ENCODE measurements at regions of chr7 and their contacts with region 1.

Region 1: DNA sequence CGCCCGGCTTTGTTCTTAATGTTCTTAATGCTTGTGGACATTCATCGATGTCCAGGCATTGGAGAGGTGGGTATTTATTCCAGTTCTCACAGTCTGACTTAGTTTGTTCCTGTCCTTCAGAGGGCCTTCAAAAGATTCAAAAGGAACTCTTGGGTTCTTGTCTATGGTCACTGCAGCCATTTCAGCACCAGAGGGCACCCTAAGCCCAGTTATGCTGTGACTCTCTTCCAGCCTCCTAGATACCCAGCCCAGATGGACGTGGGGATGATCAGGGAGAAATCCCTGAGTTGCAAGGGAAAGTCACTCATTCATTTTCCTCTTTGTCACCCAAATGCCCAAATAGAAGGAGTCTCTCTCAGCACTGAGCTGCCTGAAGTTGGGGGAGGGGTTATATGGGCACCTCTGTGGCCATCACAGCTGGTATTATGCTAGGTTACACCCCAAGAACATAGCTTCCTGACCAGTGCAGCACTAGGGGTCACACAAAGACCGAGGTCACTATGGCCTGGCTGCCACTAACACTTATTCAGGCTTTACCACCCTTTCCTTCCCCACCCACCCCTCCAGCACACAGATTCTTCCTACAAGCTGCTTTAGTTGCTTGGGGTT is 26.5 kb upstream of the CCDC126 start:
- DNase-seq: peak; percentile 77
- ATAC-seq: peak; percentile 91
- H3K4me3 ChIP-seq: no peak overlapping the region
- H3K4me3 Mint-ChIP-seq: peak overlapping the region; percentile 57
- H3K27ac ChIP-seq: no peak overlapping the region
- H3K27ac Mint-ChIP-seq: no peak overlapping the region
- H3K4me1 ChIP-seq: no peaks in the 10 kb centered on the region
- H3K4me1 Mint-ChIP-seq: peaks cover 3% of the 10 kb centered on the region
- H3K27me3 ChIP-seq: peaks cover 0 to 4% (median 0%) of the 10 kb centered on the region in 4 experiments
- H3K27me3 Mint-ChIP-seq: peaks cover 10% of the 10 kb centered on the region
- CTCF ChIP-seq: peak; percentile 84

Region 2: GRCh38 chr7:23454881-23455506 is 115.7 kb before region 1 on chr7:
- CTCF ChIA-PET with region 1: no interaction called
- POLR2A ChIA-PET with region 1: no interaction called
- intact Hi-C with region 1: no loop called
- DNase-seq: no peak
- ATAC-seq: no peak
- H3K4me3 ChIP-seq: no peak overlapping the region
- H3K4me3 Mint-ChIP-seq: no peak overlapping the region
- H3K27ac ChIP-seq: no peak overlapping the region
- H3K27ac Mint-ChIP-seq: no peak overlapping the region
- H3K4me1 ChIP-seq: no peaks in the 10 kb centered on the region
- H3K4me1 Mint-ChIP-seq: peaks cover 2% of the 10 kb centered on the region
- H3K27me3 ChIP-seq: peaks cover 0 to 12% (median 1%) of the 10 kb centered on the region in 4 experiments
- H3K27me3 Mint-ChIP-seq: peaks cover 20% of the 10 kb centered on the region
- CTCF ChIP-seq: no peak

Region 3: DNA sequence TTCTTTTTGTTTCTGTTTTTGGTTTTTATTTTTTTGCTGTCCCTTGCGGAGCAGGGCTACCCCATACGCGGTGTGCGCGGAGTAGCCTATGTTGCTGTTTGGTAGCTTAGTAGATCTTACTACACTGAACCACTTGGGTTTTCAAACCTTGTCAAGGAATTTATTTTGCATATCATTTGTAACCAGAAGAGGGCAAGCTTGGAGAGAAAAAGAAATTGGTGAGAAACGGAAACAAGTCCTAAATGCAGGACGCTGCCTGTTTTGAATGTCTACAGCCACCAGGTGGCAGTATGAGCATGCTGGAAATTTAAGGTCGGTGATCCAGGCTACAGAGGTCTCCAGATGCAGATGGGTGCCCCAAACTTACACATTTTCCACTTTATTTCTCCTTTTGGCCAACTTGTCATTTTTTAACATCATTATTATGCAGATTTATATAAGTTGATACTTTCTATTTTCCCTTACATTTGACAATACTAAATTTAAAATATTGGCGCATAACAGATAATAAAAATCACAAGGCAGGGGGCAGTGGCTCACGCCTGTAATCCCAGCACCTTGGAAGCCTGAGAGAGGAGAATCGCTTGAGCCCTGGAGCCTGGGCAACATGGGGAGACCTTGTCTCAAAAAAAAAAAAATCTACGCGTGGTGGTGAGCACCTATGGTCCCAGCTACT is 23.7 kb before region 1 on chr7:
- CTCF ChIA-PET with region 1: interaction called, 7 read pairs
- POLR2A ChIA-PET with region 1: no interaction called
- intact Hi-C with region 1: loop called (anchors 1 kb)
- DNase-seq: peak; percentile 90
- ATAC-seq: peak; percentile 91
- H3K4me3 ChIP-seq: peak overlapping the region in 1 of 5 experiments; percentile 18
- H3K4me3 Mint-ChIP-seq: no peak overlapping the region
- H3K27ac ChIP-seq: no peak overlapping the region
- H3K27ac Mint-ChIP-seq: no peak overlapping the region
- H3K4me1 ChIP-seq: peaks cover 8 to 13% of the 10 kb centered on the region in 2 donors
- H3K4me1 Mint-ChIP-seq: peaks cover 15% of the 10 kb centered on the region
- H3K27me3 ChIP-seq: no peaks in the 10 kb centered on the region
- H3K27me3 Mint-ChIP-seq: no peaks in the 10 kb centered on the region
- CTCF ChIP-seq: peak; percentile 98

Region 4: DNA sequence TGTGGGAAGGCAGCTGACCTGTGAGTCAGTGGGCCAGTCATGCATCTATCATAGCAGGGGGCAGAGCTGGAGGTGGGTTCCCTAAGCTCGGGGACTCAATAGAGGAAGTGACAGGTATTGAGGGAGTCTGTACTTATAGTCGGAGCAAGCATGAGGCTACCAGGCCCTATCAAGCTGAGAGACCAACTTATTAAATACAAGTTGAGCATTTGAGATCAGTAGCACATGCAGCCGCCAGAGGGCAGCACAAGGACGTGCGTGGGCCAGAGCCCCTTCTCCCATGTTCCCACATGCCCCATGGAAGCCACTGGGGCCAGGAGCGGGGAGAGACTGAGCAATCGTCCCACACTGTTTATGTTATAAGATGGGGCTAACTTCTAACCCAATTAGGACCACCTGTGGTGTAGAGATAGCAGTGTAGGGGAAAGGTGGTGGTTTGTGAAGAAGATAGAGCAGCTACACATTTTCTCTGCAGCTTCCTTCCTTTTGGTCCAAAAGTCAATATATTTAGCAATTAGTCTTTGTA is 126.3 kb after region 1 on chr7:
- CTCF ChIA-PET with region 1: interaction called, 15 read pairs
- POLR2A ChIA-PET with region 1: no interaction called
- intact Hi-C with region 1: no loop called
- DNase-seq: peak; percentile 67
- ATAC-seq: peak; percentile 45
- H3K4me3 ChIP-seq: no peak overlapping the region
- H3K4me3 Mint-ChIP-seq: no peak overlapping the region
- H3K27ac ChIP-seq: no peak overlapping the region
- H3K27ac Mint-ChIP-seq: no peak overlapping the region
- H3K4me1 ChIP-seq: no peaks in the 10 kb centered on the region
- H3K4me1 Mint-ChIP-seq: peaks cover 2% of the 10 kb centered on the region
- H3K27me3 ChIP-seq: no peaks in the 10 kb centered on the region
- H3K27me3 Mint-ChIP-seq: no peaks in the 10 kb centered on the region
- CTCF ChIP-seq: peak; percentile 85

Region 5: GRCh38 chr7:23717788-23718187 is 147.1 kb after region 1 on chr7:
- CTCF ChIA-PET with region 1: interaction called, 119 read pairs
- POLR2A ChIA-PET with region 1: no interaction called
- intact Hi-C with region 1: loop called (anchors 1 kb)
- DNase-seq: no peak
- ATAC-seq: no peak
- H3K4me3 ChIP-seq: no peak overlapping the region
- H3K4me3 Mint-ChIP-seq: no peak overlapping the region
- H3K27ac ChIP-seq: no peak overlapping the region
- H3K27ac Mint-ChIP-seq: no peak overlapping the region
- H3K4me1 ChIP-seq: no peaks in the 10 kb centered on the region
- H3K4me1 Mint-ChIP-seq: no peaks in the 10 kb centered on the region
- H3K27me3 ChIP-seq: no peaks in the 10 kb centered on the region
- H3K27me3 Mint-ChIP-seq: no peaks in the 10 kb centered on the region
- CTCF ChIP-seq: no peak